A549 (cell line): ENCODE measurements at regions of chr10 and their contacts with region 1.

Region 1: GRCh38 chr10:86965986-86966654 is 2.2 kb upstream of the ADIRF start:
- DNase-seq: no peak
- ATAC-seq: 0 out of 6 replicates have a peak, but pooled peaks of 1 of the 2 experiments have one; percentile 1
- H3K4me3 ChIP-seq: no peak overlapping the region
- H3K27ac ChIP-seq: peak overlapping the region; percentile 31 to 74; a peak in 4 of 6 replicates
- H3K4me1 ChIP-seq: peaks cover 30% of the 10 kb centered on the region
- CTCF ChIP-seq: no peak
- EP300 ChIP-seq: no peak
- POLR2A ChIP-seq: no peak
- RAD21 ChIP-seq: no peak

Region 2: GRCh38 chr10:86878983-86879713 is 87.0 kb before region 1 on chr10:
- CTCF ChIA-PET with region 1: no interaction called
- POLR2A ChIA-PET with region 1: no interaction called
- DNase-seq: no peak
- ATAC-seq: no peak
- H3K4me3 ChIP-seq: no peak overlapping the region
- H3K27ac ChIP-seq: no peak overlapping the region
- H3K4me1 ChIP-seq: no peaks in the 10 kb centered on the region
- CTCF ChIP-seq: no peak
- EP300 ChIP-seq: no peak
- POLR2A ChIP-seq: no peak
- RAD21 ChIP-seq: no peak

Region 3: GRCh38 chr10:86953747-86954680 is 12.1 kb before region 1 on chr10:
- CTCF ChIA-PET with region 1: interaction called, 38 read pairs
- POLR2A ChIA-PET with region 1: interaction called, 5 read pairs
- DNase-seq: no peak
- ATAC-seq: peak; percentile 9 to 39; a peak in 4 of 6 replicates
- H3K4me3 ChIP-seq: no peak overlapping the region
- H3K27ac ChIP-seq: peak overlapping the region in 1 of 2 experiments; percentile 48; a peak in 3 of 6 replicates
- H3K4me1 ChIP-seq: peaks cover 30% of the 10 kb centered on the region
- CTCF ChIP-seq: no peak
- EP300 ChIP-seq: no peak
- POLR2A ChIP-seq: no peak
- RAD21 ChIP-seq: no peak

Region 4: GRCh38 chr10:87030899-87031635 is 64.9 kb after region 1 on chr10:
- CTCF ChIA-PET with region 1: no interaction called
- POLR2A ChIA-PET with region 1: no interaction called
- DNase-seq: no peak
- ATAC-seq: no peak
- H3K4me3 ChIP-seq: no peak overlapping the region
- H3K27ac ChIP-seq: no peak overlapping the region
- H3K4me1 ChIP-seq: peaks cover 4% of the 10 kb centered on the region; the same call in 2 of the 3 replicates
- CTCF ChIP-seq: no peak
- EP300 ChIP-seq: no peak
- POLR2A ChIP-seq: no peak
- RAD21 ChIP-seq: no peak